ENCODE measurements at regions of chr3 and their contacts with region 1.

Region 1: GRCh38 chr3:56055482-56056350 is 412.6 kb downstream of the ERC2 start:
- ATAC-seq: no peak
- H3K4me3 ChIP-seq: no peak overlapping the region
- H3K27ac ChIP-seq: no peak overlapping the region
- H3K4me1 ChIP-seq: peaks cover 0 to 10% of the 10 kb centered on the region in 2 donors

Region 2: GRCh38 chr3:56238299-56238698 is 182.6 kb after region 1 on chr3:
- in situ Hi-C with region 1: loop called in 1 of 9 experiments (anchors 25 kb)
- ATAC-seq: no peak
- H3K4me3 ChIP-seq: no peak overlapping the region
- H3K27ac ChIP-seq: no peak overlapping the region
- H3K4me1 ChIP-seq: no peaks in the 10 kb centered on the region